Tibial artery (tissue), 4 donors: ENCODE measurements at regions of chr4 and their contacts with region 1.

Region 1: GRCh38 chr4:32645653-32646052 is 1925.5 kb downstream of the PCDH7 start:
- DNase-seq: no peak
- H3K4me3 ChIP-seq: no peak overlapping the region
- H3K27ac ChIP-seq: no peak overlapping the region
- H3K4me1 ChIP-seq: no peaks in the 10 kb centered on the region
- H3K27me3 ChIP-seq: no peaks in the 10 kb centered on the region
- CTCF ChIP-seq: no peak

Region 2: GRCh38 chr4:31474221-31474620 is 1171.4 kb before region 1 on chr4:
- intact Hi-C with region 1: loop called (anchors 5 kb)
- DNase-seq: no peak
- H3K4me3 ChIP-seq: no peak overlapping the region
- H3K27ac ChIP-seq: no peak overlapping the region
- H3K4me1 ChIP-seq: no peaks in the 10 kb centered on the region
- H3K27me3 ChIP-seq: no peaks in the 10 kb centered on the region
- CTCF ChIP-seq: no peak

Region 3: DNA sequence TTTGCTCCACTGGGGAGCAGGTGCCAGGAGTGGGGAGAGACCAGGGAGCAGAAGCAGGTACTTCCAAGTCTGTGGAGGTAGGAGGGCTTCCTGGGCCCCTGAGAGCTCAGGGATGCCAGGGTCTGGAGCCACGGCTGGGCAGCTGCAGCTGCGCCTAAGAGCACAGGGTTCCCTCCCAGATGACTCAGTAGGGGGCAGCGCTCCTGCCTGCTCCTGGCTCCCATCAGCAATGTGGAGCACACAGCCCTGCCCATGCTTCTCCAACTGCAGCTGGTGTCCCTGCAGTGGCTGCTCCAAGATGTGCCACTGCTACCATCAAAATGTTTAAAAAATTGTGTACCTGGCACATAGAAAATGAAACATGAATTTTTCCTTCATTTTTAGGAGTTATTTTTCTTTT is 897.3 kb before region 1 on chr4:
- intact Hi-C with region 1: no loop called
- DNase-seq: no peak
- H3K4me3 ChIP-seq: no peak overlapping the region
- H3K27ac ChIP-seq: no peak overlapping the region
- H3K4me1 ChIP-seq: no peaks in the 10 kb centered on the region
- H3K27me3 ChIP-seq: no peaks in the 10 kb centered on the region
- CTCF ChIP-seq: no peak

Region 4: DNA sequence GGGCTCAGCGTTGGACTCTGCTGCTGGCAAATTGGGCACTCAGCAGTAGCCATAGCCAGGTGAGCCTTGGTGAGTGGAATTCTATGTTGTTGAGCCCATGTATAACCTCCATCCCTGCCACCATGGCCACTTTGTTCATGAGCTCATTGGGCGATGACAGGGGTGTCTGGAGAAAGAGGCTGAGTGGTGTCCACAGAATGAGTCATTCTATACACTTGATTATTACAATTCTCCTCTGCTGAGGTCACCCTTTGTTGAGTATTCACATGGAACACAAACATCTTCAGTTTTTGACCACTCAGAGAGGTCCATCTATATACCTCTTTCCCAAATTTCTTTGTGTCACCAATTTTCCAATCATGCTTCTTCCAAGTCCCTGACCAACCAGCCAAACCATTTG is 583.7 kb before region 1 on chr4:
- intact Hi-C with region 1: no loop called
- DNase-seq: no peak
- H3K4me3 ChIP-seq: no peak overlapping the region
- H3K27ac ChIP-seq: no peak overlapping the region
- H3K4me1 ChIP-seq: no peaks in the 10 kb centered on the region
- H3K27me3 ChIP-seq: no peaks in the 10 kb centered on the region
- CTCF ChIP-seq: no peak

Region 5: GRCh38 chr4:32985256-32985655 is 339.6 kb after region 1 on chr4:
- intact Hi-C with region 1: no loop called
- DNase-seq: no peak
- H3K4me3 ChIP-seq: no peak overlapping the region
- H3K27ac ChIP-seq: no peak overlapping the region
- H3K4me1 ChIP-seq: no peaks in the 10 kb centered on the region
- H3K27me3 ChIP-seq: no peaks in the 10 kb centered on the region
- CTCF ChIP-seq: no peak